Body of pancreas (tissue), 4 donors: ENCODE measurements at regions of chr4 and their contacts with region 1.

Region 1: GRCh38 chr4:173494013-173494970 is 35.7 kb downstream of the HAND2 start:
- DNase-seq: peak; percentile 56 to 74 (median 70)
- ATAC-seq: peak; percentile 91
- H3K4me3 ChIP-seq: peak overlapping the region; percentile 16 to 20
- H3K27ac ChIP-seq: no peak overlapping the region
- H3K4me1 ChIP-seq: peaks cover 9% of the 10 kb centered on the region
- H3K27me3 ChIP-seq: no peaks in the 10 kb centered on the region
- CTCF ChIP-seq: peak; percentile 62 to 76 (median 73)
- POLR2A ChIP-seq: no peak

Region 2: DNA sequence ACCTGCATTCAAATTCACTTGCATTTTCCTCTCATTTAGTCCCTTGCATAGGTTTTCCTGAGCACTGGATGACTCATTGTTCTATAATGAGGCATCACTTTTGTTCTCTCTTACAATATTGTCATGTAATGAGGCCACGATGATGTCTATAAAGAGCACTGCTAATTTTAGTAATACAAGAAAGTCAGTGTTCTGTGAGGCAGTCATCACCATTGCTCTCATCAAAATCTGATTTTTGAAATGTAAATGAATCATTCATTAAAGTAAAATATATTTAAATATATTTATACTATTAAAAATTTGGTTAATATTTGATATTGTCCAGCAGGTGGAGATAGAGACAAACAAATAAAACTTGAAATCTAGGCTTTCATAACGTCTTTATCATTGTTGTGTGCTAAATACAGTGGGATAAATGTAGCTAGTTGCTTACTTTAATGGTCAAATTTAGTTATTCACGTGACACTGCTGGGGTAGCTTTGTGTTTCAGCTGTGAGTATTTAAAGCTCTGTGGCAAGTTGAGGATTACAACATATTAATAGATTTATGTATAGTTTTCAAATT is 175.6 kb before region 1 on chr4:
- intact Hi-C with region 1: loop called (anchors 10 kb)
- DNase-seq: no peak
- ATAC-seq: peak; percentile 50
- H3K4me3 ChIP-seq: no peak overlapping the region
- H3K27ac ChIP-seq: no peak overlapping the region
- H3K4me1 ChIP-seq: no peaks in the 10 kb centered on the region
- H3K27me3 ChIP-seq: no peaks in the 10 kb centered on the region
- CTCF ChIP-seq: peak in 6 of 7 experiments; percentile 25 to 47 (median 40)
- POLR2A ChIP-seq: no peak